ENCODE measurements at regions of chr3 and their contacts with region 1.

Region 1: GRCh38 chr3:189270248-189270832 is 98.6 kb downstream of the TPRG1 start:
- DNase-seq: peak; percentile 84
- H3K4me3 ChIP-seq: no peak overlapping the region
- H3K27ac ChIP-seq: peak overlapping the region; percentile 90
- H3K4me1 ChIP-seq: peaks cover 51% of the 10 kb centered on the region
- H3K27me3 ChIP-seq: no peaks in the 10 kb centered on the region
- CTCF ChIP-seq: peak; percentile 97

Region 2: DNA sequence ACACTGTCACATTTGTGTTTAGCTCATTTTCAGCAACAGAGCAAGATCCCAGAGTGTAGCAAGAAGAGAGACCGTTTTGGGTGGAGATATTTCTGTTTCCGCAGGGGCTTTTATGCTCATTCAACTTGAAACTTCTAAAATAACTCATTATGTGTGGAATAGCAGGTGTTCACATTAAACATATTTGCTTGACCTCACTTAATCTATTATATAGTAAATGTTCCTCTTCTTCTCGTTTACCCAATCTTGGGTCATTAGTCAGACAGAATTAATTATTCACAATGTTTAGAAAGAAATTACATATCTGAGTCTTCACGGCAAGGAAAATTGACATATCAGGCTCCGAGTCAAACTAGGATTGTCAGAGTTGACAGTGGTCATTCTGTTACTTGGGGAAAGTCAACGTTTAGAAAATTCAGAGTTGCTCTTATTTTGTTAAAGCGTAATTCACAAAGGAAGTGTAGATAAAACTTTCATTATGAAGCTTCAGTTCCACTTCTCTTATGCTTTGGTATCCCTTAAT is 124.3 kb after region 1 on chr3:
- CTCF ChIA-PET with region 1: no interaction called
- dilution Hi-C with region 1: no loop called
- in situ Hi-C with region 1: no loop called
- intact Hi-C with region 1: loop called (anchors 1 kb)
- DNase-seq: no peak
- H3K4me3 ChIP-seq: no peak overlapping the region
- H3K27ac ChIP-seq: no peak overlapping the region
- H3K4me1 ChIP-seq: peaks cover 29% of the 10 kb centered on the region
- H3K27me3 ChIP-seq: no peaks in the 10 kb centered on the region
- CTCF ChIP-seq: no peak

Region 3: DNA sequence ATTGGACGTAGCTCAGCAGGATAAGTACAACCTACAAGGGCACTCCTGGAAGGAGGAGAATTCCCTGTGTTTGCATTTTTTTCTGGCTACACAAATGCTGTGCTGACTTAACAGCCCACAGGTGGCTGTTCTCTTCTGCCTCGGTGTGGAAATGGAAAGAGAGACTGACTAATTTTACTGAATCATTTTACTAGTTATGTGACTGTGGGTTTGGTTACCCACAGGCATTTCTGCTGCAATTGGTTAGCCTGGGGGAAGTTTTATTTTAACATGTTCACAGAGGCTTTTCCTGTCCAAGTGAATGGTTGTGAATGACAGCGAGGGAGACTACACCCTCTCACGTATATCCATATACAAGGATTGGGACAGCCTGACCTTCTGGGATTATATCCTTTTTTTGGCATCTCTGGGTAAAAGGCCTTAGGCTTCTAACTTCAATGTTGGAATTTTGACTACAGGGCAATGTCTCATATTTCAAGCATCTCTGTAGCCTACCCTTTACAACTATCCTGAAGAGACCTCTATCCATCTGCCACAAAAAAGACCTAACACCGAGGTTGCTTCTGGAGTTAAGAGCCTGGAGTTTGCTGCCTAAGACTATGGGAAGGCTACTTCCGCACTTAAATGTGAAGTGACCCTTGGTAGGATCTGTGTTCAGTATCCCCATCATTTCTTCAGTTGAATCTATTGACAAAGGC is 293.7 kb after region 1 on chr3:
- CTCF ChIA-PET with region 1: no interaction called
- dilution Hi-C with region 1: no loop called
- in situ Hi-C with region 1: no loop called
- intact Hi-C with region 1: loop called (anchors 1 kb)
- DNase-seq: peak; percentile 98
- H3K4me3 ChIP-seq: no peak overlapping the region
- H3K27ac ChIP-seq: peak overlapping the region; percentile 68
- H3K4me1 ChIP-seq: peaks cover 14% of the 10 kb centered on the region
- H3K27me3 ChIP-seq: no peaks in the 10 kb centered on the region
- CTCF ChIP-seq: peak in 1 of 2 donors; percentile 27

Region 4: GRCh38 chr3:189710620-189711402 is 440.5 kb after region 1 on chr3:
- CTCF ChIA-PET with region 1: no interaction called
- dilution Hi-C with region 1: no loop called
- in situ Hi-C with region 1: no loop called
- intact Hi-C with region 1: loop called (anchors 2 kb)
- DNase-seq: peak; percentile 96
- H3K4me3 ChIP-seq: no peak overlapping the region
- H3K27ac ChIP-seq: peak overlapping the region; percentile 82
- H3K4me1 ChIP-seq: peaks cover 14% of the 10 kb centered on the region
- H3K27me3 ChIP-seq: no peaks in the 10 kb centered on the region
- CTCF ChIP-seq: no peak

Region 5: DNA sequence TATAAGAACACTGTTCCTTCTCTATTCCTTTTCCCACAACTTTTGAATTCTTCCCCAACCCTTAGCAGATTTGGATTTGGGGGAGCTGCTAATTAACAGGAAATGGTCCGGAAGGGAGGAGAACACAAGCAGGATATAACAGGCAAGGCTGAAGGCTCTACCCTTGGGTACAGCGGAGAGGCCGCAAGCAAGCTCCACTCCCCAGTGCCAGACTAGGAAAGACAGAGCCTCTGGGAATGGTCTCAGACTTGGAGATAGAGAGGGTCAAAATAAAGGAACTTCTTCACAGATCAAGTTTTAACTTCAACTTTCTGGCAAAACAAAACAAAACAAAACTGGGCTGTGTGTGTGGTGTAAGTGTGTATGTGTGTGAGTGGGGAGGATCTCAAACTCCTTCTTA is 521.8 kb after region 1 on chr3:
- CTCF ChIA-PET with region 1: interaction called, 4 read pairs
- dilution Hi-C with region 1: no loop called
- in situ Hi-C with region 1: loop called (anchors 5 to 10 kb)
- intact Hi-C with region 1: loop called (anchors 1 kb)
- DNase-seq: peak; percentile 74
- H3K4me3 ChIP-seq: peak overlapping the region; percentile 70 to 97 (median 92)
- H3K27ac ChIP-seq: peak overlapping the region; percentile 97
- H3K4me1 ChIP-seq: peaks cover 34% of the 10 kb centered on the region
- H3K27me3 ChIP-seq: no peaks in the 10 kb centered on the region
- CTCF ChIP-seq: no peak

Region 6: DNA sequence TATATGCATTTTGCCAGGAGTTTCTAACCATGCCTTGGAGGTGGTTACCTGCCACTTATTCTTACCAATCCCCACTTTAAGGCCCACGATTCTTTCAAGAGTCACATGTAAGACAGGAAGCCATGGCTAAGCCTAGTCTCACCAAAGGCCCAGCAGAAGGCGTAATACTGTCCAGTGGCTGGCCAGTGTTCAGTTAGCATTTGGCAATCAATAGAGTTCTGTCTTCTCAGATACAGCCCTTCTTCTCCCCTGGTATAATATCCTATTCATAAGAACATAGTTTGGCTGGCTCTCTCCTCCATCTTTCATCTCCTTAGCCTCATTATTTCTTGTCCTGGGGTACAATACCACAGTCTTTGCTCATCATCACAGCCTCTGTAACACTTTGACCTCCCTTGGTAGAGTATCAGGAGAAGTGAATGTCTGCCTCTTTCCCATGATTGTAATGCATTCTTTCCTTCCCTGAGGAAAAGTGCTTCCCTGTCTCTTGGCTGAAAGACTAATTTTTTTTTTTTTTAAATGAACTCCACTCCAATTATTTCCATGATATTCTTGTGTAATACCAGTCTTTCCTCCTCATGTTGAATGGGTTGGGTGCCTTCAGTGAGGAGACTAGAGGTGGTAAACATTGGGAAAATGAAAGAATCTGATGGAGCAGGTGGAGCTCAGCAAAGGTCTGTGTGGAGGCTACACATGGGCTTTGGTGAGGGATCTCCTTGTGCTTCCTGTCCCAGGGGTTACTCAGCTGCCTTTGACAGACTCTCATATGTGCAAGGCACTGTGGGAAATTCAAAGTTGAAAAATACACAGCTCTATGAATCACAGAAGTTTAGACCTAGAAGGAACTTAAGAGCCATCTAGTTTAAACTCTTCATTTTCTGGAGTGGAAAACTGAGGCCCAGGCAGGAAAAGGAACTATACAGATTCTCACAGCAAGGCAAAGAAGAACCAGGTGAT is 632.2 kb after region 1 on chr3:
- CTCF ChIA-PET with region 1: no interaction called
- dilution Hi-C with region 1: no loop called
- in situ Hi-C with region 1: no loop called
- intact Hi-C with region 1: loop called (anchors 5 kb)
- DNase-seq: no peak
- H3K4me3 ChIP-seq: no peak overlapping the region
- H3K27ac ChIP-seq: no peak overlapping the region
- H3K4me1 ChIP-seq: peaks cover 20% of the 10 kb centered on the region
- H3K27me3 ChIP-seq: no peaks in the 10 kb centered on the region
- CTCF ChIP-seq: no peak

Measured in mammary epithelial cell (primary cell).